ENCODE measurements at regions of chr7 and their contacts with region 1.

Region 1: GRCh38 chr7:106609416-106609815 is 51.5 kb downstream of the CCDC71L start:
- DNase-seq: peak; percentile 68
- H3K4me3 ChIP-seq: no peak overlapping the region
- H3K27ac ChIP-seq: peak overlapping the region; percentile 58
- H3K4me1 ChIP-seq: peaks cover 41% of the 10 kb centered on the region
- H3K27me3 ChIP-seq: no peaks in the 10 kb centered on the region
- CTCF ChIP-seq: no peak

Region 2: GRCh38 chr7:106520962-106521940 is 88.2 kb before region 1 on chr7:
- CTCF ChIA-PET with region 1: no interaction called
- dilution Hi-C with region 1: no loop called
- in situ Hi-C with region 1: no loop called
- intact Hi-C with region 1: no loop called
- DNase-seq: peak; percentile 19
- H3K4me3 ChIP-seq: no peak overlapping the region
- H3K27ac ChIP-seq: no peak overlapping the region
- H3K4me1 ChIP-seq: no peaks in the 10 kb centered on the region
- H3K27me3 ChIP-seq: no peaks in the 10 kb centered on the region
- CTCF ChIP-seq: peak; percentile 21 to 31

Region 3: DNA sequence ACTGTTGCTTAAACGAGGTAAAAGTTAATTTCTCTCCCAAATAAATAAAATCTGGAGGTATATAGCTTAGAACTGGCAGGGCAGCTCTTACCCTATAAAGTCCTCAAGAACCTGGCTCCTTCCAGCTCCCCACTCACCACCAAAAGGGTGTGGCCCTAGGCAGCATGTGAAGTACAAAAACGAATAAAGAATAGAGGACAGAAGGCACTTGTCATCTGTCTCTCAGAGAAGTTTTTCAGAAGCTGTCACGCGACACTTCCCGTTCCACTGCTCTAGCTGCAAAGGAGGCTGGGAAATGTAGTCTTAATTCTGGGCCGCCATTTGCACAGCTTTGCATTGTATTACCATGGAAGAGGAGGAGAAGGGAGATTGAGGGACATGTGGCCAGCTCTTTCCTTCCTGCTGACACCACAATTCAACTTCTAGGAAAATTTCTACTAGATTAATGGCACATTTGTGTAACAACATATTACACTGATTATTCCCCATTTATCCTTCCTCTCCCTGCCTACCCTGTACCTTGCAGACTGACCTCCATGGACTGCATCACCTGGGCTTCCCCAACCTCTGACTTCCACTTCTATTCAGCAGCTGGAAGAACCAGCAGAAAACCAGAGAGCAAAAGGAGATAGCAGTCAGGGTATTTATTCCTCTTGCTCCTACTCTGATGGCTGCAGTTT is 10.6 kb before region 1 on chr7:
- CTCF ChIA-PET with region 1: no interaction called
- dilution Hi-C with region 1: no loop called
- in situ Hi-C with region 1: no loop called
- intact Hi-C with region 1: loop called (anchors 1 kb)
- DNase-seq: peak; percentile 72
- H3K4me3 ChIP-seq: no peak overlapping the region
- H3K27ac ChIP-seq: no peak overlapping the region
- H3K4me1 ChIP-seq: peaks cover 9% of the 10 kb centered on the region
- H3K27me3 ChIP-seq: no peaks in the 10 kb centered on the region
- CTCF ChIP-seq: no peak